Tibial artery (tissue), 4 donors: ENCODE measurements at regions of chr7 and their contacts with region 1.

Region 1: GRCh38 chr7:18352339-18353255 is 143.0 kb upstream of the HDAC9 start:
- DNase-seq: no peak
- H3K4me3 ChIP-seq: no peak overlapping the region
- H3K27ac ChIP-seq: no peak overlapping the region
- H3K4me1 ChIP-seq: peaks cover 0 to 14% (median 2%) of the 10 kb centered on the region in 4 donors
- H3K27me3 ChIP-seq: no peaks in the 10 kb centered on the region
- CTCF ChIP-seq: peak; percentile 52 to 71

Region 2: GRCh38 chr7:18570890-18571478 is 218.4 kb after region 1 on chr7:
- intact Hi-C with region 1: loop called (anchors 10 kb)
- DNase-seq: no peak
- H3K4me3 ChIP-seq: peak overlapping the region; percentile 33 to 38
- H3K27ac ChIP-seq: peak overlapping the region; percentile 27 to 45
- H3K4me1 ChIP-seq: peaks cover 0 to 34% (median 0%) of the 10 kb centered on the region in 4 donors
- H3K27me3 ChIP-seq: no peaks in the 10 kb centered on the region
- CTCF ChIP-seq: peak; percentile 43 to 46

Region 3: DNA sequence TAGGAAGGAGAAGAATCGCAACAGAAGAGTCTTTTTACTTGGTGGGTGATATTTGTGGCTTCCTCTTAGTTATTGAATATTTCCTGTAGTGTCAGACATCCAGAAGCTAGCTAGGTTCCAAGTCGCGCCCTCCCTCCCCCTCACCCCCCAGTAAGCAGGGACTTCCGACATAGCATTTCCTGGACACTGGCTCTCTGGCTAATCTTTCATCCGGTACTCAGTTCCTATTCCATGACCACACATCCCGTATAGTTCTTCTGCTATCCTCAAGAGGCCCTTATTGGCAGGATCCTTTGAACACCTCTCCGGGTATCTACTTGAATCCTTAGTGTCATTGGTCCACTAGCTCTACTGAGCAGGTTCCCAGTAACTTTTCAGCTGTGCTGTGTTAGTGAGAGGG is 310.7 kb after region 1 on chr7:
- intact Hi-C with region 1: loop called (anchors 5 kb)
- DNase-seq: no peak
- H3K4me3 ChIP-seq: no peak overlapping the region
- H3K27ac ChIP-seq: no peak overlapping the region
- H3K4me1 ChIP-seq: peaks cover 0 to 10% (median 2%) of the 10 kb centered on the region in 4 donors
- H3K27me3 ChIP-seq: no peaks in the 10 kb centered on the region
- CTCF ChIP-seq: no peak